ENCODE measurements at regions of chr20 and their contacts with region 1.

Region 1: DNA sequence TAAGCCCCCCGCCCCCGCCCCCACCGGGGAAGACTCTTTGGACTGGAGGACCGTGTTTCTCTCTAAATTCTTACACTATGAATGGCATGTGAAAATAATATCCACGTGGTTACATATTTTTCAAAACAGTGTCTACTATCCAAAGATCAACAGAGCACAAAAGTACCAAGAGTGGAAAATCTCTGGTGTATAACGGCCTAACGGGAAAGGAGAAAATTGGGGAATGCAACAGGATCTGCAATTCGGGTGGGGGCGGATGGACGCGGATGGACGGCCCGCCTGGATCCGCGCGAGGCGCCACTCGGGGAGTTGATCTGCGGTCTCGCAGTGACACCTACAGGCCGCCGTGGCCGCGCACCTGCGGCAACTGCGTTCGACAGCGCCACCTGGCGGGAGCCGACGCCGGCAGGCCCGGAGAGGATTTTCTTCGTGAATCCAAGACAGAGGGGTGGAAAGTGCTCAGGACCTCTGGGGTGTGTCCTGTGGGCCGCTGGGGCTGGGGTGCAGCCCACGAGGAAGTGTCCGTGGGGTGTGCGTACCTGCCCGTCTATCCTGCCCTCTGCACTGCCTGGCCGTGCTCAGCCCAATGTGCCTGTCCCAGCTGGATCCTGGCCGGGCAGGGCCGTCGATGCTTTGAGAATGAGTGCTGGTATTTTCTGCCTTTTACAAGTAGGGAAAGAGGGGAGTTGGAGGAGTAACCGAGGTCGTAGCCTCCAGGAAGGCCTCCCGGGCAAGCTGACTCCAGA is 18.6 kb downstream of the ANKRD60 start:
- DNase-seq: peak; percentile 94
- ATAC-seq: peak; percentile 88

Region 2: GRCh38 chr20:57514273-57514751 is 695.5 kb before region 1 on chr20:
- intact Hi-C with region 1: loop called (anchors 2 kb)
- DNase-seq: no peak
- ATAC-seq: peak; percentile 80

Region 3: DNA sequence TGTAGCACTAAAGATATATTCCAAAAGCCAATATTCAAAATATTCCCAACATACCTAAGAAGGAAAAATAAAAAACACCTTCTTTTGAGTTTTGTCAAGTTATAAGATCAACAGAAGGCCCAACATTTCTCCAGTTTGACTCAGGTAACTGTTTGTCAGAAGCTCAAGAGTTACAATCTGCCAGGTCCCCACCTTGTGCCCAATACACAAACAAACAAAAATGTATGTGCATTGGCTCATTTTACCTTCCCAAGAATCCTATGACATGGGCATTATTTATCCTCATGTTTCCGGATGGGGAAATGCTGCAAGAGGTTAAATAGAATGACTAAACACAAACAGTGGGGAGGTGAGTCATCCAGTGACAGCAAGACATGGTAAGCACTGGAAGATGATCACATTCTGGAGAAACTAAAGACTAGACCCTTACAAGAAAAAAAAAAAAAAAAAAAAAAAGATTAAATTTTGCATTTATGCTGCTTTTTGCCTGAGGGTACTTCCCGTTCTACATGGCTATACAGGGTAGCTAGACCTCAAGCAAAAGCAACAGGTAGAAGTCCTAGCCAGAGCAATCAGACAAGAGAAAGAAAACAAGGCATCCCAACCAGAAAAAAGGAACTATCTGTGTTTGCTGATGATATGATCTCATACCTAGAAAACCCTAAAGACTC is 42.2 kb after region 1 on chr20:
- intact Hi-C with region 1: no loop called
- DNase-seq: no peak
- ATAC-seq: no peak